ENCODE measurements at regions of chr3 and their contacts with region 1.

Region 1: DNA sequence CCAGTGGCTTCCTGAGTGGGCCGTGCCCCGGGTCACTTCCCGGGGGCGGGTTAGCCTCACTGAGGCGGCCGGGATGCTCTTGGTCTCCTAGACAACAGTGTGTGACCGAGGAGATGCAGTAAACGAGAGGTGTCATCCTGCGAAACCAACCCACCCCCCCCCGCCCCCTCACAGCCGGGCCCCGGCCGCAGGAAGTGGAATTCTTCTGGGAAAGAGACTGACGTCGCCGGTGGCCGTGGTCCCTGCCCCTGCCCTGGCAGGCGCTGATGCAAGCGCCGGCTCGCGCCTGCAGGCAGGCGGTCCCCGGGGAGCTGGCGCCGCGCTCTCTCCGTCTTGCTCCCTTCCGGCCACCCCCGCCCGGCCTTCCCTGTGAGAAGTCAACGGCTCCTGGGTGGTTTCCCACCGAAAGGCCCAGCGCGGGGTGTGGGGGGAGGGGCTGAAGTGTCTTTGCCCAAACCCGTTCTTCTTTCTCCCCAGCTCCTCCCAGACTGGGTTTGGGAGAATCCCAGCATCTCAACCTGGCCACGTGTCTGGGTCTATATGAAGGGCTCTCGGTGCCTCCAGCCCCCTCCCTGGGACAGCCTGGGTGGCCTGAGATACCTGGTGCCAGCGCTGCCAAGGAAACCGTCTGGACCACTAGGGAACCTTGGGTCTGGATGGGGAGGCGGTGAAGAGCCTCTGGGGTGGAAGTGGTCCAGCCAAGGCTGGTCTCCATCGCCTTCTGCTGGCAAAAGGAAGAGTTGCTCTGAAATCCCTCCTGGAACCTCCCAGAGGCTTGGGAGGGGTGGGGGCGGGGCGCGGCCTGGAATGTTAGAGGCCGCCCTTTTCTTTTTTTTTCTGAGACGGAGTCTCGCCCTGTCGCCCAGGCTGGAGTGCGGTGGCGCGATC is 47.3 kb downstream of the BHLHE40 start:
- DNase-seq: peak; percentile 84 to 85
- H3K4me3 ChIP-seq: peak overlapping the region; percentile 21 to 89 (median 63)
- H3K27ac ChIP-seq: no peak overlapping the region
- H3K4me1 ChIP-seq: peaks cover 0 to 5% (median 1%) of the 10 kb centered on the region in 4 experiments; a peak in 2 of 7 replicates
- H3K27me3 ChIP-seq: no peaks in the 10 kb centered on the region
- CTCF ChIP-seq: peak; percentile 67 to 89 (median 73)
- EP300 ChIP-seq: 0 out of 3 replicates have a peak, but pooled peaks of 1 of the 2 experiments have one; percentile 6
- POLR2A ChIP-seq: peak in 1 of 2 experiments; percentile 50; a peak in 1 of 3 replicates
- RAD21 ChIP-seq: peak; percentile 91 to 93

Region 2: DNA sequence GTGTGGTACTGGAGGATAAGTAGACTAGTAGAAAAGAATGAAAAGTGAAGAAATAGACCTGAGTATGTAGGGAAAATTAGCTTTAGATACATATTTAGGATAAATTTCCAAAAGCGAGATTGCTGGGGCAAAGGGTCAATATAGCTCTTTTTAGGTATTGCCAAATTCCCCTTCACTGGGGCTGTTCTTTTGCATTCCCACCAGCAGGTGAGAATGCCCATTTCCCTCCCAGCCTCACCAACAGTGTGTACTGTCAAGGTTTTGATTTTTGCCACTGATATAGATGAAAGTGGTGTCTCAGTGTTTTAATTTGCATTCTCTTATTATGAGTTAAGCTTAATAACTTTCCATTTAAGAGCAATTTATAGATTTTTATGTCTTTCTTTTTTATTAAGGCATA is 83.0 kb before region 1 on chr3:
- CTCF ChIA-PET with region 1: no interaction called
- POLR2A ChIA-PET with region 1: no interaction called
- DNase-seq: no peak
- H3K4me3 ChIP-seq: no peak overlapping the region
- H3K27ac ChIP-seq: no peak overlapping the region
- H3K4me1 ChIP-seq: peaks cover 0 to 2% (median 0%) of the 10 kb centered on the region in 4 experiments; a peak in 1 of 7 replicates
- H3K27me3 ChIP-seq: no peaks in the 10 kb centered on the region
- CTCF ChIP-seq: peak; percentile 36 to 61 (median 37)
- EP300 ChIP-seq: no peak
- POLR2A ChIP-seq: no peak
- RAD21 ChIP-seq: peak; percentile 14 to 25; a peak in 2 of 4 replicates

Region 3: DNA sequence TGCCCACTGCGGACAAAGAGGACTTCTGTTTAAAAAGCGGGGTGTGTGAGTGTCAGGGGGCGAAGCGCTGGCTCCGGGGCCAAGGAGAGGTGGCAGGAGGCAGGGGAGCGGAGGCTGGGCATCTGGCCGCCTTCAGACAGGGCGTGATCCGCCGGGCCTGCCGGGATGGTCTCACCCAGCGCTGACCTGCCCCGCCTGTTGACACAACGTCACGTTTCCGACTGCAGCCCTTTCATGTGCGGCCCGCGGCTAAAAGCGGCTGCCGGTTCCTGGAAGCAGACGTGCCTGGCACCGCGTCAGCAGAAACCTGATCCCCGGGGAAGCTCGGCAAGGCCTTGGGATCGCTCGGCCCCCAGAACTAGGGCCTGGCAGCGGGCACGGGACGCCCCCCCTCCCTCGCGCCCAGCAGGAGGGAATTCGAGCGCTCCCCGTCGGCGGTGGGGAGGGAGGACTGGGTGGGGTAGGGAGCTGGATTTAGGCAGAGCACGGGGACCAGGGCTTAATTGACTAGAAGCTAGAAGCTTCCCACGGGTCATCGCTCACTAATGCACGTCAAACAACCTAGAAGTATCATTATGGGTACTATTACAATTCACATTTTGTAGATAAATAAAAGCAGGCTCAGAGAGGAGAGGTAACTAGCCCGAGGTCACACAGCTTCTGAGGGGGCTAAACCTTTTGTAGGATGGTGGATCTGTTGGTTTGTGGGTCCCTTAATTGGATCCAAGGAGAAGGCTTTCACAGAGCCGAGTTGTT is 39.6 kb before region 1 on chr3:
- CTCF ChIA-PET with region 1: interaction called, 23 read pairs
- POLR2A ChIA-PET with region 1: interaction called, 5 read pairs
- DNase-seq: peak; percentile 85 to 90
- H3K4me3 ChIP-seq: peak overlapping the region; percentile 40 to 67 (median 60)
- H3K27ac ChIP-seq: no peak overlapping the region
- H3K4me1 ChIP-seq: peaks cover 0 to 8% (median 5%) of the 10 kb centered on the region in 4 experiments; a peak in 4 of 7 replicates
- H3K27me3 ChIP-seq: peaks cover 0 to 7% (median 6%) of the 10 kb centered on the region in 4 experiments; a peak in 4 of 7 replicates
- CTCF ChIP-seq: no peak
- EP300 ChIP-seq: peak in 1 of 2 experiments; percentile 52; a peak in 1 of 3 replicates
- POLR2A ChIP-seq: peak in 1 of 2 experiments; percentile 42; a peak in 1 of 3 replicates
- RAD21 ChIP-seq: 0 out of 4 replicates have a peak, but pooled peaks of 1 of the 2 experiments have one; percentile 10

Region 4: DNA sequence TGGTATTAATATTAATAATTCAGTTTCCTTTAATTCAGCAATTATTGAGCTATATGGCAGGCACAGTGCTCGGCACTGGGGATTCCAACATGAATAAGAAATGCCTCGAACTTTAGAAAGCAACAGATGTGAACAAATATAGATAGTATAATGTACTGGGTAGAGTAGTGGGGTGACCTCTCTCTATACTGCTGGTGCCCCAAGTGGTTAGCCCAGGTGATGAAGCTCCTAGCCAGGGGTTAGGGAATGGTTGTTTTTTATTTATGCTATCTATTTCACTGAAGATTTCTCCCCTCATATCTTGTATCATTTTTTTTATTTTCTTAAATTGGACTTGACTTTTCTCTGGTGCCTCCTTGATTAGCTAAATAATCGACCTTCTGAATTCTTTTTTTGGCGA is 14.7 kb after region 1 on chr3:
- CTCF ChIA-PET with region 1: interaction called, 13 read pairs
- POLR2A ChIA-PET with region 1: no interaction called
- DNase-seq: no peak
- H3K4me3 ChIP-seq: no peak overlapping the region
- H3K27ac ChIP-seq: no peak overlapping the region
- H3K4me1 ChIP-seq: no peaks in the 10 kb centered on the region
- H3K27me3 ChIP-seq: no peaks in the 10 kb centered on the region
- CTCF ChIP-seq: peak; percentile 8 to 27 (median 26); a peak in 3 of 4 replicates
- EP300 ChIP-seq: no peak
- POLR2A ChIP-seq: no peak
- RAD21 ChIP-seq: peak in 1 of 2 experiments; percentile 26; a peak in 1 of 4 replicates

Measured in H1 (cell line).